ENCODE measurements at regions of chr1 and their contacts with region 1.

Region 1: GRCh38 chr1:87292684-87293493 is 35.8 kb upstream of the LMO4 start:
- DNase-seq: peak; percentile 30 to 70
- ATAC-seq: no peak

Region 2: DNA sequence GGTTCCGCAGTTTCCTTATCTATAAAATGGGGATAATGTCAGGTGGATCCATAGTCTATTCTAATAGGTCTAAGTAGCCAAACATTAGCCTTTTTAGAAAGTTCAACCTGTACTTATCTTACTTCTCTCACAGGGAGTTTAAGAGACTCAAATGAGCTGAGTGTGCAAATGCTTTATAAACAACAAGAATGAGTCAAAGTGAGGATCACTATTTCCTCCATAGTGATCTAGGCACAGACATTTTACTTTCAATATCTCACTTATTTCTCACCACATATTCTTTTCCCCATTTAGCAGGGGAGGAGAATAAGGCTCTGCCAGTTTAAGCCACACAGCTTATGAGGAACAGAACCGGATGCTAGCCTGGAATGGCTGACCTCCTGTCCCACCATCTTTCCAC is 56.3 kb before region 1 on chr1:
- intact Hi-C with region 1: no loop called
- DNase-seq: no peak
- ATAC-seq: no peak

Region 3: DNA sequence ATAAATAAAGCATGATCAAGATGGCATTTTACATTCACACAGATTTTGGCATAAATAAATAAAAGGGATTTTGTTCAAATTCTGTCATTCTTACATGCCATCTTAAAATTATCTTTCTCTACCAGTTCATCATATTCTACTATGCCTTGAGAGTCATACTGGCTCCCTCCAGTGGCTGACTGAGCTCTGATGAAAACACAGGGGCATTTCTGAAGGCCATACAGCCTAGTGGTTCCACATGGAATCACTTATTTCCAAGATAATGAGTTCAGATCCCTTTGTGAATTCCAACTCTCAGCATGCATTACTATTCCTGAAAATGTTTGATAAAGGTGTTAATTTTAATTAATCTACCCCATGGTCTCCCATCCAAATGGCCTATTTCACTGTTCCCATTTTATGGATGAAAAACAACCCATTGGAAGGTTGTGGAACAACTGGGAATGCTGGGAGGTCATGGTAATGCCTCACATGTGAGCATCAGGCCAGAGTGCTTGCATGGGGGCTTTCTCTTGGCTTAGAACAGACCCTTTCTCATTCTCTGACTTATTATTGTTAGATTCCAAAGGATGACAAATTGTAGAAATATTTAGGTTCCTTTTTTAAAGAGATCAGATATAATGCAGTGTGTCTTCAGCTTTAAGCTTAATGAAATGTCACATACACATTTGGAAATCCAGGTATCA is 768.7 kb after region 1 on chr1:
- intact Hi-C with region 1: loop called in 1 of 2 experiments (anchors 10 kb)
- DNase-seq: peak; percentile 37 to 70
- ATAC-seq: peak; percentile 91

Measured in left colon (tissue), 2 donors.